CD4-positive, alpha-beta T cell (primary cell): ENCODE measurements at regions of chr19 and their contacts with region 1.

Region 1: DNA sequence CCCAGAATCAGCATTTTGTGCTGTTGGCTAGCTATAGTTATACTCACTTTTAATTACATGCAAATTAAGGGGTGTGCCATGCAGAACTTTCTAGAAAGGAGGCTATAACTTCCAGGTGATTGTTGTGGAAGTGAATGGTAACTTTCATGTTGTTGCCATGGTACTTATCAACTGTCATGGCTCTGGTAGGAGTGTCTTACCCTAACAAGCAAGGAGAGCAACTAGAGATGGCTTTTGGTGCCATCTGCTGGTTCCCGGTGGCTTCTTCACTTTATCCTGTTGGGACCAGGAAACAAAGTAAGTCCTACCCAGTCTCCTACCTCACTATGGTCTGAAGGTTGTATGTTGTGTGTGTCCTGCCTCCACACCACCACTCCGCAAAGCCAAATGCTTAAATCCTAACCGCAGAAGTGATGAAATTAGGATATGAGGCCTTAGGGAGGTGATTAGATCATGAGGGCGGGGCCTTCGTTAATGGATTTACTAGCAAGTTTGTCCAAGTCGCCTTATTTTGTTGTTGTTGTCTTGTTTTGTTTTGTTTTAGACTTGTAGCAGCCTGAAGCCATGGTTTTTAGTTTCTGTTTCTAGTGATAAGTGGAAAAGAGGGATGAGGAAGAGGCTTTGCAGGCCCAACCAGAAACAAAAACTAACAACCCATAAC is 22.6 kb downstream of the FBXL12 start:
- DNase-seq: peak; percentile 72 to 95 (median 82)
- ATAC-seq: peak; percentile 32
- H3K4me3 ChIP-seq: no peak overlapping the region
- H3K4me3 Mint-ChIP-seq: peak overlapping the region; percentile 81
- H3K27ac ChIP-seq: peak overlapping the region; percentile 56 to 71
- H3K27ac Mint-ChIP-seq: peak overlapping the region; percentile 90
- H3K4me1 ChIP-seq: peaks cover 28% of the 10 kb centered on the region
- H3K4me1 Mint-ChIP-seq: peaks cover 34% of the 10 kb centered on the region
- H3K27me3 ChIP-seq: no peaks in the 10 kb centered on the region
- H3K27me3 Mint-ChIP-seq: no peaks in the 10 kb centered on the region
- CTCF ChIP-seq: peak; percentile 82

Region 2: GRCh38 chr19:9140159-9140874 is 655.9 kb before region 1 on chr19 and contains the start of gene ZNF317:
- CTCF ChIA-PET with region 1: no interaction called
- POLR2A ChIA-PET with region 1: no interaction called
- intact Hi-C with region 1: loop called (anchors 1 to 2 kb)
- DNase-seq: peak; percentile 81 to 96 (median 85)
- ATAC-seq: peak; percentile 90
- H3K4me3 ChIP-seq: peak within 1 kb of the TSS; percentile 94
- H3K4me3 Mint-ChIP-seq: peak within 1 kb of the TSS; percentile 96
- H3K27ac ChIP-seq: peak within 1 kb of the TSS; percentile 86 to 87
- H3K27ac Mint-ChIP-seq: peak within 1 kb of the TSS; percentile 94
- H3K4me1 ChIP-seq: peaks cover 22% of the 10 kb centered on the region
- H3K4me1 Mint-ChIP-seq: peaks cover 48% of the 10 kb centered on the region
- H3K27me3 ChIP-seq: no peaks in the 10 kb centered on the region
- H3K27me3 Mint-ChIP-seq: peaks cover 5% of the 10 kb centered on the region
- CTCF ChIP-seq: no peak
- total RNA-seq, gene ZNF317: 110 TPM

Region 3: DNA sequence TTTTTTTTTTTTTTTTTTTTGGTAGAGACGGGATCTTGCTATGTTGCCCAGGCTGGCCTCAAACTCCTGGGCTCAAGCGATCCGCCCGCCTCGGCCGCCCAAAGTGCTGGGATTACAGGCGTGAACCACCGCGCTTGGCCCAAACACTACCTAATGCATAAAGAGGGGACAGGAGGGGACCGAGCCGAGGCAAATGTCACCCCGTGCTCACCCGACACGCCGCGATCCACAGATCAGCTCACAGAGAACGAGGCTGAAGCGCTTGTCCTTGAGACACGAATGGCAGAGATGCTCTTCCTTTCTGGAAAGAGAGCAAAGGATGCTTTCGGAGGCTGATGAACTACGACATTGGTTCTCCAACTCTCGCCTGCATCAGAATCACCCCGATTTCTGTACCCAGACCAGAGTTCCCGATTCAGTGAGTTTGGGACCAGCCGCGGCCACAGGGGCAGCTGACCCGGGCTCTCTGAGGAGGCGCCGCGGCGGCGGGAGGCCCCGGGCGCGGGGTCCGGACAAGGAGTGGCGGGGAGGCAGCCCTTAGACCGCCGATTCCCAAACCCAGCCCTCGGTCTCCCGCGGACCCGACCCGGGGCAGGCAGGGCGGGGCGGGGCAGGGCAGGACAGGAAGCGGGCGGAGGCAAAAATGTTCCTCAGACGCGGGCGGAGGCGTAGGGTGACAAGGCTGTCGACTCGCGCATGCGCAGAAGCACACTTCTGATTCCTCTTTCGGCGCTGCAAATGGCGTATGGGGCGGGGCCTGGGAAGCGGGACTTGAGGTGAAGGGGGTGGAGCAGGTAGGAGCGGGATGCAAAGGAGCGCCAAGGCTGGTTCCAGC is 486.9 kb before region 1 on chr19 and contains the start of gene ZNF699:
- CTCF ChIA-PET with region 1: no interaction called
- POLR2A ChIA-PET with region 1: no interaction called
- intact Hi-C with region 1: loop called in 1 of 2 experiments (anchors 2 kb)
- DNase-seq: peak; percentile 95 to 99 (median 98)
- ATAC-seq: peak; percentile 94
- H3K4me3 ChIP-seq: peak within 1 kb of the TSS; percentile 94
- H3K4me3 Mint-ChIP-seq: peak within 1 kb of the TSS; percentile 95
- H3K27ac ChIP-seq: peak within 1 kb of the TSS; percentile 74 to 87
- H3K27ac Mint-ChIP-seq: peak within 1 kb of the TSS; percentile 94
- H3K4me1 ChIP-seq: peaks cover 27% of the 10 kb centered on the region
- H3K4me1 Mint-ChIP-seq: peaks cover 34% of the 10 kb centered on the region
- H3K27me3 ChIP-seq: no peaks in the 10 kb centered on the region
- H3K27me3 Mint-ChIP-seq: no peaks in the 10 kb centered on the region
- CTCF ChIP-seq: no peak
- total RNA-seq, gene ZNF699: 13.4 to 14.2 TPM

Region 4: GRCh38 chr19:9435279-9436268 is 360.7 kb before region 1 on chr19 and contains the start of gene ZNF266:
- CTCF ChIA-PET with region 1: interaction called, 3 read pairs
- POLR2A ChIA-PET with region 1: interaction called, 3 read pairs
- intact Hi-C with region 1: loop called (anchors 10 kb)
- DNase-seq: peak; percentile 87 to 97 (median 90)
- ATAC-seq: peak; percentile 89
- H3K4me3 ChIP-seq: peak within 1 kb of the TSS; percentile 66
- H3K4me3 Mint-ChIP-seq: peak within 1 kb of the TSS; percentile 95
- H3K27ac ChIP-seq: peak within 1 kb of the TSS; percentile 85 to 89
- H3K27ac Mint-ChIP-seq: peak within 1 kb of the TSS; percentile 97
- H3K4me1 ChIP-seq: peaks cover 19% of the 10 kb centered on the region
- H3K4me1 Mint-ChIP-seq: peaks cover 49% of the 10 kb centered on the region
- H3K27me3 ChIP-seq: no peaks in the 10 kb centered on the region
- H3K27me3 Mint-ChIP-seq: no peaks in the 10 kb centered on the region
- CTCF ChIP-seq: peak; percentile 80
- total RNA-seq, gene ZNF266: 45.5 to 46.2 TPM

Region 5: GRCh38 chr19:9584073-9584833 is 212.0 kb before region 1 on chr19 and contains the start of gene ZNF121:
- CTCF ChIA-PET with region 1: interaction called, 7 read pairs
- POLR2A ChIA-PET with region 1: interaction called, 4 read pairs
- intact Hi-C with region 1: loop called (anchors 1 kb)
- DNase-seq: peak; percentile 53 to 88 (median 68)
- ATAC-seq: peak; percentile 70
- H3K4me3 ChIP-seq: peak within 1 kb of the TSS; percentile 82
- H3K4me3 Mint-ChIP-seq: peak within 1 kb of the TSS; percentile 98
- H3K27ac ChIP-seq: peak within 1 kb of the TSS; percentile 92 to 93
- H3K27ac Mint-ChIP-seq: peak within 1 kb of the TSS; percentile 98
- H3K4me1 ChIP-seq: peaks cover 23% of the 10 kb centered on the region
- H3K4me1 Mint-ChIP-seq: peaks cover 36% of the 10 kb centered on the region
- H3K27me3 ChIP-seq: no peaks in the 10 kb centered on the region
- H3K27me3 Mint-ChIP-seq: peaks cover 5% of the 10 kb centered on the region
- CTCF ChIP-seq: no peak
- total RNA-seq, gene ZNF121: 42.0 to 42.1 TPM

Region 6: GRCh38 chr19:9674663-9675357 is 121.4 kb before region 1 on chr19 and contains the start of gene ZNF562:
- CTCF ChIA-PET with region 1: no interaction called
- POLR2A ChIA-PET with region 1: no interaction called
- intact Hi-C with region 1: loop called in 1 of 2 experiments (anchors 5 kb)
- DNase-seq: peak; percentile 64 to 89 (median 73)
- ATAC-seq: peak; percentile 88
- H3K4me3 ChIP-seq: peak within 1 kb of the TSS; percentile 92
- H3K4me3 Mint-ChIP-seq: peak within 1 kb of the TSS; percentile 99
- H3K27ac ChIP-seq: peak within 1 kb of the TSS; percentile 81 to 83
- H3K27ac Mint-ChIP-seq: peak within 1 kb of the TSS; percentile 98
- H3K4me1 ChIP-seq: peaks cover 13% of the 10 kb centered on the region
- H3K4me1 Mint-ChIP-seq: peaks cover 23% of the 10 kb centered on the region
- H3K27me3 ChIP-seq: no peaks in the 10 kb centered on the region
- H3K27me3 Mint-ChIP-seq: no peaks in the 10 kb centered on the region
- CTCF ChIP-seq: no peak
- total RNA-seq, gene ZNF562: 12.8 to 13.3 TPM

Region 7: GRCh38 chr19:9818734-9819589 is 22.7 kb after region 1 on chr19 and contains the start of gene FBXL12:
- CTCF ChIA-PET with region 1: no interaction called
- POLR2A ChIA-PET with region 1: interaction called, 5 read pairs
- intact Hi-C with region 1: loop called (anchors 1 kb)
- DNase-seq: peak; percentile 100
- ATAC-seq: peak; percentile 90
- H3K4me3 ChIP-seq: peak within 1 kb of the TSS; percentile 95
- H3K4me3 Mint-ChIP-seq: peak within 1 kb of the TSS; percentile 95
- H3K27ac ChIP-seq: peak within 1 kb of the TSS; percentile 97 to 100
- H3K27ac Mint-ChIP-seq: peak within 1 kb of the TSS; percentile 92
- H3K4me1 ChIP-seq: peaks cover 25% of the 10 kb centered on the region
- H3K4me1 Mint-ChIP-seq: peaks cover 37% of the 10 kb centered on the region
- H3K27me3 ChIP-seq: no peaks in the 10 kb centered on the region
- H3K27me3 Mint-ChIP-seq: no peaks in the 10 kb centered on the region
- CTCF ChIP-seq: no peak
- total RNA-seq, gene FBXL12: 33.4 to 38.4 TPM

Region 8: DNA sequence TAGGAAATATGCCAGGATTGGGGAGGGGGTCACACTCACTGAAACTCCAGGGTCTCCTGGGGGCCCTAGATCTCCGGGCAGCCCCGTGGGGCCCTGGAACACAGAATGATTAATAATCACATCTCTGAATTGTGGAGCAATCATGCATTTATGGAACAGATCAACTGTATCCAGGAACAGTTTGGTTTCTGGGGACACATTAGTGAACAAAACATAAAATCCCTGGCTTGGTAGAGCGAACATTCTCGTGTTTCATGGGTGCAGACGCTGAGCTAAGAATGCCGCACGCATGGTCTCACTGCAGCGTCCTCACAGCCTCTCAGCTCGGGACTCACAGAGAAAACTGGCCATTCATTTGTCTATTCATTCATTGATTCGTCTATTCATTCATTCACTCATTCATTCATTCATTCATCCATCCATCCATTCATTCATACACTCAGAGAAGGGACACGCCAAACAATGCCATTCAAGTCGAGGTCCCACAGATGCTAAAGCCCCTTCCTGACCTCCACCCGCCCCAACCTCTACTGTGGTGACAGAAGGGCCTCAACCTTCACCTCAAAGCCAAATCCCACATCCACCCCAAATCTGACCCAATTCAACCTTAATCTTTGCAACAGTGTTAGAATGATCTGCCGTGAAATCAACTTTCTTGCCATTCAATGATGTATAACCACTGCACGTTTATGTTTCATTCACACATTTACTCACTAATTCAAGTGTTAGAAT is 175.1 kb after region 1 on chr19:
- CTCF ChIA-PET with region 1: no interaction called
- POLR2A ChIA-PET with region 1: no interaction called
- intact Hi-C with region 1: no loop called
- DNase-seq: no peak
- ATAC-seq: no peak
- H3K4me3 ChIP-seq: no peak overlapping the region
- H3K4me3 Mint-ChIP-seq: no peak overlapping the region
- H3K27ac ChIP-seq: no peak overlapping the region
- H3K27ac Mint-ChIP-seq: no peak overlapping the region
- H3K4me1 ChIP-seq: no peaks in the 10 kb centered on the region
- H3K4me1 Mint-ChIP-seq: no peaks in the 10 kb centered on the region
- H3K27me3 ChIP-seq: peaks cover 6 to 19% of the 10 kb centered on the region in 2 experiments
- H3K27me3 Mint-ChIP-seq: peaks cover 39% of the 10 kb centered on the region
- CTCF ChIP-seq: no peak

Region 9: GRCh38 chr19:10043286-10043927 is 247.2 kb after region 1 on chr19:
- CTCF ChIA-PET with region 1: no interaction called
- POLR2A ChIA-PET with region 1: no interaction called
- intact Hi-C with region 1: no loop called
- DNase-seq: no peak
- ATAC-seq: no peak
- H3K4me3 ChIP-seq: no peak overlapping the region
- H3K4me3 Mint-ChIP-seq: no peak overlapping the region
- H3K27ac ChIP-seq: no peak overlapping the region
- H3K27ac Mint-ChIP-seq: no peak overlapping the region
- H3K4me1 ChIP-seq: no peaks in the 10 kb centered on the region
- H3K4me1 Mint-ChIP-seq: no peaks in the 10 kb centered on the region
- H3K27me3 ChIP-seq: peaks cover 8 to 10% of the 10 kb centered on the region in 2 experiments
- H3K27me3 Mint-ChIP-seq: peaks cover 50% of the 10 kb centered on the region
- CTCF ChIP-seq: no peak

Region 10: DNA sequence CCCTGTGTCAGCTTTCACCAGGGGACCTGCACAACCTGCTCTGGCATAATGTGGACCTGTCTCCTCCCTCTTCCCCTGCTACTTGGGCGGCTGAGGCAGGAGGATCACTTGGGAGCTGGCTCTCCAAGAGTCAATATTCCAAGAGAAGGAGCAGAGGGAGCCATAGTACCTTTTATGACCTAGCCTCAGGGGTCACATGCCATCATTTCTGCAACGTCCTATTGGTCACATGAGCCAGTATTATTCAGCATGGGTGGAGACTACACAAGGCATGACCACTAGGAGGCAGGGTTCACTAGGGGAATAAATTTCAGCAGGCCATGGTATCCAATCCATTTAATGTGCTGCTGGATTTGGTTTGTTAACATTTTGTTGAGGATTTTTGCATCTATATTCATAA is 277.9 kb after region 1 on chr19:
- CTCF ChIA-PET with region 1: no interaction called
- POLR2A ChIA-PET with region 1: no interaction called
- intact Hi-C with region 1: no loop called
- DNase-seq: peak in 10 of 14 experiments; percentile 13 to 77 (median 43)
- ATAC-seq: peak; percentile 71
- H3K4me3 ChIP-seq: no peak overlapping the region
- H3K4me3 Mint-ChIP-seq: no peak overlapping the region
- H3K27ac ChIP-seq: no peak overlapping the region
- H3K27ac Mint-ChIP-seq: no peak overlapping the region
- H3K4me1 ChIP-seq: no peaks in the 10 kb centered on the region
- H3K4me1 Mint-ChIP-seq: no peaks in the 10 kb centered on the region
- H3K27me3 ChIP-seq: no peaks in the 10 kb centered on the region
- H3K27me3 Mint-ChIP-seq: no peaks in the 10 kb centered on the region
- CTCF ChIP-seq: peak; percentile 44